ENCODE measurements at regions of chr7 and their contacts with region 1.

Region 1: DNA sequence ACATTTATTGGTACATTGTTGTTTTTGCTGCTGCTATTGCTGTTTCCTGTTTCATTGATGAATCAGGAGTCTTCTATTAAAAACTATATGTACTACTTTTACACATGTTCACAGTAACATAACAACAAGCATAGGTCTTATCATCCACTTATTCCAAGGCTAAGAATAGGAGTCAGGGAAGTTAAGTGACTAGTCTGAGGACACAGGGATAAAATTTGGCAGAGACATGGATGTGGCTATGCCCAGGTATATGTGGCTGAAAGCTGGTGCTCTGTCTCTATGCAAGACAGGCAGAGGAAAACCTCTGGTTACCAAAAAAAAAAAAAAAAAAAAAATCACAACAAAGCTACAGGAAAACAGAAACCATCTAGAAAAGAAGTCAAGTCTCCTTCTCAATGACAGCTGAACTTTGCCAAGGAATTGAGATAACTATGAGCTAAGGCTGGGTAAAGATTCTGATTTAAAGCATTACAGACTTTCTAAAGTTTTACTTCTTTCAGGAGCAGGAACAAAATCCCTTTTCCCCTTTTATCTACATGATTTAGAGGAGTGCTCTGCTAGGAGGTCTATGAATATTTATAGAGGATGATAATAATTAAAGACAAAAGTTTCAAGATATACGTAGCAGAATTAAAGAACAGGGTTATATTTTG is 70.0 kb downstream of the GPR141 start:
- DNase-seq: no peak
- H3K4me3 Mint-ChIP-seq: no peak overlapping the region
- H3K27ac Mint-ChIP-seq: no peak overlapping the region
- H3K4me1 Mint-ChIP-seq: no peaks in the 10 kb centered on the region
- H3K27me3 Mint-ChIP-seq: peaks cover 7% of the 10 kb centered on the region

Region 2: GRCh38 chr7:37719077-37719476 is 34.4 kb before region 1 on chr7:
- intact Hi-C with region 1: loop called (anchors 1 kb)
- DNase-seq: no peak
- H3K4me3 Mint-ChIP-seq: no peak overlapping the region
- H3K27ac Mint-ChIP-seq: no peak overlapping the region
- H3K4me1 Mint-ChIP-seq: no peaks in the 10 kb centered on the region
- H3K27me3 Mint-ChIP-seq: no peaks in the 10 kb centered on the region

Region 3: DNA sequence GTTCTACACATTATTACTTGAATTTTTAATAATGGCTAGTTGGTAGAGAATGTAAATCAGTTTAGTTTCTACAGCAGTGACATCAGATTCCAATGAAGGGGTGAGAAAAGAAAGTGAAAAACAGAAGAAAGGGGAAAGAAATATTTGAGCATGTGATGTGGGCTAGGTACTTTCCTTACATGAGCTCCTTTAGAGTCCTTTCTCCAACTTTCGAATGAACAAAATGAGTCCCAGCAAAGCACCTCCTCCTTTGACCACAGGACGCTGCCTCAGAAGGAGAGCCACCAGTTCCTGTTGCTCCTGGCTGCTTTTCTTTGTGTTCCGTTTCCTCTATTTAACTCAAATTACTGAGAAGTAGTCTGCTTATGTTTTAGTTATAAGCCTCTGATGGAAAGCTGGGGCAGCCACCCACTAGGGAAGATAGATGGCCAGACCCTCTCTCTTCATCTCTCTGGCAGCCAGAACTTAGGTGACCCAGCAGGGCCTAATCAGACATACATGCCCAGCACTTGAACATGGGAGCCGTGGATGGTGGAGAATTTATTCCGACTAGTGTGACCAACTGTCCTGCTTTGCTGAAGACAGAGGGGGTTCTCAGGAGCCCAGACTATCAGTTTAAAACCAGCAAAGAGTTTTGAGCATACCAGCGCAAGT is 12.5 kb after region 1 on chr7:
- intact Hi-C with region 1: no loop called
- DNase-seq: peak; percentile 3
- H3K4me3 Mint-ChIP-seq: no peak overlapping the region
- H3K27ac Mint-ChIP-seq: no peak overlapping the region
- H3K4me1 Mint-ChIP-seq: peaks cover 10% of the 10 kb centered on the region
- H3K27me3 Mint-ChIP-seq: no peaks in the 10 kb centered on the region

Measured in activated T-helper 1 cell treated with anti-CD3 and anti-CD28 coated beads, Interleukin-12 subunit alpha, Interleukin-12 subunit beta, Interleukin-2, Interleukin-4 antibody, amounts not matched to agents 30 ng/mL and 10 ng/mL and 1 ng/mL, durations not matched to agents 14 hours and 24 hours and 36 hours (primary cell).